K562 (cell line): ENCODE measurements at regions of chr5 and their contacts with region 1.

Region 1: GRCh38 chr5:64958757-64959391 is 190.1 kb downstream of the CWC27 start:
- DNase-seq: peak in 2 of 4 experiments; percentile 5 to 26
- ATAC-seq: peak; percentile 43; the same call in 1 of the 3 replicates
- H3K4me3 ChIP-seq: no peak overlapping the region
- H3K27ac ChIP-seq: no peak overlapping the region
- H3K4me1 ChIP-seq: no peaks in the 10 kb centered on the region
- H3K27me3 ChIP-seq: no peaks in the 10 kb centered on the region
- CTCF ChIP-seq: peak; percentile 12 to 63 (median 34); a peak in 3 of 6 replicates
- EP300 ChIP-seq: no peak
- POLR2A ChIP-seq: no peak
- RAD21 ChIP-seq: peak; percentile 64 to 84

Region 2: DNA sequence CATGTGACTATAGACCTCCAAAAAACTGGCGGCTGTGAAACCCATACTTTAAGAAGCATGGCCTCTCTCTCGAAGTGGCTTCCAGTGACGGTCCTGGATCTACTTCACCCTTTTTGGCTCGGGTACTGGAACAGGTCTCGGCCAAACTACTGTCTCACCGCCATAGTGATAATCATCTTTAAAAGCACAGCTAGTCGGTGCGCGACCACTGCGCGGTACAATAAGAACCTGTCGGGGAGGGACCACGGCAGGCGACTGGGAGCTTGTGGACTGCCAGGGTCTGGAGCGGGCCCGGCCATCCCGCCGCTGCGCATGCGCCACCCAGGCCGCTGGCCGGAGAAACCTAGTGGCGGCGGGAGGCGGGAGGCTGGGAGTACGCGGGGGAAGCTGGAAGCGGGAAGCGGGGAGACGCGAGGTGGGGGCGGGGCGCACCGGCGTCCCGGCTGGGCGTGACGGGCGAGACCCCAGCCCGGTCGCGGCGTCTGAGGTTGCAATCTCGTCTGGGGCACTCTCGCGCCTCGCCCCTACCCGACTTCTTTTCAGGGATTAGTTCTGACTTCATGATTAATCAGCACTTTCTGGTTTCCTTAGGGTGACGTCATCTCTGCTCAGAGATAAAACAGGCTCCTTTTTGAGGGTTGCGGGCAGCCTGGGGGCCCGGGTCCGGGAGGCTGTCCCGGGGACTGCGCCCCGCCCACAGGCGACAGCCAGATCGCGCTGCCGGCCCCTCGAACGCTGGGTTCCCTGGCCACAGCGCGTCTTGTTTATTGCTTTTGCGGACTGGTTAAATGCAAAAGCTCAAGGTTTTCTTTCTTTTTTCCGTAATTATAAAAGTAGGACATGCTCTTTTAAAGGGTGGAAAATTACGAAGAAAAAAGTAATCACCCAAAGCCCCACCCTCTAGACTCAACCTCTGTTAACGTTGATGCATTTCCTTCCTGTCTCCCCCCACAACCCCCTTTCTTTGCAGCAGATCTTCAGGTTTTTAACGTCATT is 76.6 kb after region 1 on chr5:
- CTCF ChIA-PET with region 1: no interaction called
- POLR2A ChIA-PET with region 1: no interaction called
- in situ Hi-C with region 1: no loop called
- intact Hi-C with region 1: loop called (anchors 5 kb)
- DNase-seq: peak; percentile 94 to 98 (median 96)
- ATAC-seq: peak; percentile 95
- H3K4me3 ChIP-seq: peak overlapping the region; percentile 45
- H3K27ac ChIP-seq: peak overlapping the region; percentile 94
- H3K4me1 ChIP-seq: peaks cover 14 to 24% of the 10 kb centered on the region in 2 experiments
- H3K27me3 ChIP-seq: no peaks in the 10 kb centered on the region
- CTCF ChIP-seq: 0 out of 6 replicates have a peak, but pooled peaks of 1 of the 3 experiments have one; percentile 4
- EP300 ChIP-seq: peak; percentile 53
- POLR2A ChIP-seq: peak; percentile 80
- RAD21 ChIP-seq: no peak